MCF 10A (cell line): ENCODE measurements at regions of chr1 and their contacts with region 1.

Region 1: DNA sequence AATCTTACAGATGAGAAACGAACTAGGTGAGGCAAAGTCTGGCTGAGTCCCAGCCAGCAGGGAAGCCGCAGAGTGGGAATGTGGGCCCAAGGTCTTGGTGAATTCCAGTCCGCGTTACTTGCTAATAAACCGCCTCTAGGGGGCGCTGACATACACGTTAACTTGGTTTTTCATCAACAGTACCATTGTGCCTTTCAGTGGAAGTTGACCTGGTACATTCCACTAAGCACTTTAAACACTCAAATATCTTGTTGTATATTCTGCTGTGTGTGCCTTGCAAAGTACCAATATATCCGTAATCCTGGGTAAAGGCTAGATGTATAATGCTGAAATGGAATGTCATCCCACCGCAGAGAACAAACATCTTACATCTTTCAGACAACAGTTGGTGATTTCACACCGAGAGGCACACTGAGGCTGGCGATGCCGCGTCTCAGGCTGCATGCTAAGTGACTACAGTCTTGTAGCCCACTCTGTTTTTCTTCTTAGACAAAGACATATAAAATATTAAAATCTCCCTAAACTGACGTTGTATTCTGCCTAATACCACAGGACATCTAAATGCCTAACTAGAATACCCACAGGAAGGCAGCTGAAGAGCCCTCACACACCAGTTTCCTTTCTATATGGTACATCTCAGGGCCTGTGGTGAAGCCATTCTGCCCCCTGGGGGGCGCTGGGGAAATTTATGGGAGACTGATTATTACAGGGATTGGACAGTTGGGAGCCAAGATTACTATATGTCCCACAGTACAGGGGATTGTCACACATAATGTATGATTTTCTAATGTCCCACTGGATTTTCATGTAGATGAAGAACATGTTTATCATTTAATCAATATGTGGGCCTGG is 49.2 kb upstream of the C1orf198 start:
- DNase-seq: peak; percentile 93
- H3K4me3 Mint-ChIP-seq: no peak overlapping the region
- H3K27ac Mint-ChIP-seq: no peak overlapping the region
- H3K4me1 Mint-ChIP-seq: peaks cover 6% of the 10 kb centered on the region
- H3K27me3 Mint-ChIP-seq: no peaks in the 10 kb centered on the region
- CTCF ChIP-seq: peak; percentile 96

Region 2: GRCh38 chr1:229714964-229715603 is 1202.4 kb before region 1 on chr1:
- CTCF ChIA-PET with region 1: no interaction called
- POLR2A ChIA-PET with region 1: no interaction called
- intact Hi-C with region 1: no loop called
- DNase-seq: peak; percentile 83
- H3K4me3 Mint-ChIP-seq: no peak overlapping the region
- H3K27ac Mint-ChIP-seq: peak overlapping the region; percentile 17
- H3K4me1 Mint-ChIP-seq: no peaks in the 10 kb centered on the region
- H3K27me3 Mint-ChIP-seq: no peaks in the 10 kb centered on the region
- CTCF ChIP-seq: peak; percentile 88

Region 3: GRCh38 chr1:230744382-230744781 is 173.1 kb before region 1 on chr1:
- CTCF ChIA-PET with region 1: interaction called, 4 read pairs
- POLR2A ChIA-PET with region 1: no interaction called
- intact Hi-C with region 1: loop called (anchors 1 kb)
- DNase-seq: peak; percentile 19
- H3K4me3 Mint-ChIP-seq: no peak overlapping the region
- H3K27ac Mint-ChIP-seq: no peak overlapping the region
- H3K4me1 Mint-ChIP-seq: no peaks in the 10 kb centered on the region
- H3K27me3 Mint-ChIP-seq: no peaks in the 10 kb centered on the region
- CTCF ChIP-seq: no peak

Region 4: DNA sequence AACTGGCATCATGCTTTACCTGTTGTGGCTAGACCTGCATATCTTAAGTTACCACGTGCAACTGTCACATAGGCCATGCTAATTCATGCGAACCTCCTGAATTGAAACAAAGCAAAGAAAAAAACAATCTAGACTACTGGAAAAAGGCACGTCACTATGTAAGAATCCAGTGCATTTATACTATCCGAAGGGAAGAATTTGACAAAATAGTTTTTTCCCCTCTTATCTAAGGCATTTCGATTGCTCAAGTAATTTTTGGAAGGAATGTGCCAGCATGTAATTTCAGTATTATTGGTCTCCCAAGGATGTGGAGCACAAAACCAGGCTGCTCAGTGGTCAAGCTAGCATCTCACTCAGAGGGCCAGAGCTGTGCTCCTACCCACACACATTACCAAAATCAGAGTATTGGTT is 17.7 kb before region 1 on chr1:
- CTCF ChIA-PET with region 1: interaction called, 15 read pairs
- POLR2A ChIA-PET with region 1: interaction called, 5 read pairs
- intact Hi-C with region 1: no loop called
- DNase-seq: no peak
- H3K4me3 Mint-ChIP-seq: no peak overlapping the region
- H3K27ac Mint-ChIP-seq: peak overlapping the region; percentile 1
- H3K4me1 Mint-ChIP-seq: no peaks in the 10 kb centered on the region
- H3K27me3 Mint-ChIP-seq: no peaks in the 10 kb centered on the region
- CTCF ChIP-seq: no peak

Region 5: GRCh38 chr1:230930986-230931385 is 13.5 kb after region 1 on chr1:
- CTCF ChIA-PET with region 1: interaction called, 12 read pairs
- POLR2A ChIA-PET with region 1: interaction called, 5 read pairs
- intact Hi-C with region 1: no loop called
- DNase-seq: peak; percentile 33
- H3K4me3 Mint-ChIP-seq: no peak overlapping the region
- H3K27ac Mint-ChIP-seq: no peak overlapping the region
- H3K4me1 Mint-ChIP-seq: peaks cover 8% of the 10 kb centered on the region
- H3K27me3 Mint-ChIP-seq: no peaks in the 10 kb centered on the region
- CTCF ChIP-seq: no peak

Region 6: GRCh38 chr1:230986976-230987375 is 69.5 kb after region 1 on chr1:
- CTCF ChIA-PET with region 1: interaction called, 3 read pairs
- POLR2A ChIA-PET with region 1: no interaction called
- intact Hi-C with region 1: loop called (anchors 2 kb)
- DNase-seq: peak; percentile 90
- H3K4me3 Mint-ChIP-seq: no peak overlapping the region
- H3K27ac Mint-ChIP-seq: no peak overlapping the region
- H3K4me1 Mint-ChIP-seq: peaks cover 11% of the 10 kb centered on the region
- H3K27me3 Mint-ChIP-seq: no peaks in the 10 kb centered on the region
- CTCF ChIP-seq: no peak

Region 7: GRCh38 chr1:231603598-231604275 is 686.2 kb after region 1 on chr1:
- CTCF ChIA-PET with region 1: interaction called, 4 read pairs
- POLR2A ChIA-PET with region 1: no interaction called
- intact Hi-C with region 1: loop called (anchors 5 kb)
- DNase-seq: peak; percentile 84
- H3K4me3 Mint-ChIP-seq: peak overlapping the region; percentile 84
- H3K27ac Mint-ChIP-seq: peak overlapping the region; percentile 66
- H3K4me1 Mint-ChIP-seq: peaks cover 12% of the 10 kb centered on the region
- H3K27me3 Mint-ChIP-seq: peaks cover 26% of the 10 kb centered on the region
- CTCF ChIP-seq: peak; percentile 91